ENCODE measurements at regions of chr2 and their contacts with region 1.

Region 1: DNA sequence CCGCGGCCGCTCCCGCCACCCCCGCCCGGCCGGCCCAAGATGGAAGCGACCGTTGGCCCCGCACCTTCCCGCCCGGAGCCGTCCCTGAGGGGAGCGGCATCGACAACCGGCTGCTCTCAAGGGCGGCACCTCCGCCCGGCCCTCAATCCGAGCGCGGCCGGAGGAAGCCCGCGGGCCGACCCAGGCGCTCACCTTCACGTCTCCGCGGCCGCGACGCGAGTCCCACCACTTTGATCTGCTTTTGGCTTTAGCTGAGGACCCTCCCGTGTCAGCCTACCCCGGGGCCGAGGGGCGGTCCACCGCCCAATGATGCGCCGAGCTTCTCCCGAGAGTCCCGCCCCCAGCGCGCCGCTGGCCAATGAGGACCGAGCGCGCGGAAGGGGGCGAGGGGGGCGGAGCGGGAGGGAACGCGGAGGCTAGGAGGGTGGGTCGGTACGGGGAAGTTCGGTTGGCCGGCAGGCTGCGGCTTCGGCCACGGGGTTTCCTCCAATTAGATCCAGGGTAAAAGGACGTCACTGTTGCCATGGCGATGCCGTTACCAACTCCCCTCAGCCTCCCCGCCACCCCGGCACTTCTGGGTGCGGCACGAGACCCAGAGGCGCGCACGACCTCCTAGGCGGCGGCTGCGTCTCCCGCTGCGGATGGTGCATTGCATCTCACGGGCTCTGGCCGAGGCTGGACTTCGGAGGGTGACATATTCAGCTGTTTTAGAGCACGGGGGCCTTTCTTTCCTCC is at the start of gene YWHAQ:
- DNase-seq: peak; percentile 95
- H3K4me3 Mint-ChIP-seq: peak within 1 kb of the TSS; percentile 97
- H3K27ac Mint-ChIP-seq: peak within 1 kb of the TSS; percentile 93
- H3K4me1 Mint-ChIP-seq: peaks cover 45% of the 10 kb centered on the region
- H3K27me3 Mint-ChIP-seq: no peaks in the 10 kb centered on the region
- total RNA-seq, gene YWHAQ: 248 to 261 TPM

Region 2: DNA sequence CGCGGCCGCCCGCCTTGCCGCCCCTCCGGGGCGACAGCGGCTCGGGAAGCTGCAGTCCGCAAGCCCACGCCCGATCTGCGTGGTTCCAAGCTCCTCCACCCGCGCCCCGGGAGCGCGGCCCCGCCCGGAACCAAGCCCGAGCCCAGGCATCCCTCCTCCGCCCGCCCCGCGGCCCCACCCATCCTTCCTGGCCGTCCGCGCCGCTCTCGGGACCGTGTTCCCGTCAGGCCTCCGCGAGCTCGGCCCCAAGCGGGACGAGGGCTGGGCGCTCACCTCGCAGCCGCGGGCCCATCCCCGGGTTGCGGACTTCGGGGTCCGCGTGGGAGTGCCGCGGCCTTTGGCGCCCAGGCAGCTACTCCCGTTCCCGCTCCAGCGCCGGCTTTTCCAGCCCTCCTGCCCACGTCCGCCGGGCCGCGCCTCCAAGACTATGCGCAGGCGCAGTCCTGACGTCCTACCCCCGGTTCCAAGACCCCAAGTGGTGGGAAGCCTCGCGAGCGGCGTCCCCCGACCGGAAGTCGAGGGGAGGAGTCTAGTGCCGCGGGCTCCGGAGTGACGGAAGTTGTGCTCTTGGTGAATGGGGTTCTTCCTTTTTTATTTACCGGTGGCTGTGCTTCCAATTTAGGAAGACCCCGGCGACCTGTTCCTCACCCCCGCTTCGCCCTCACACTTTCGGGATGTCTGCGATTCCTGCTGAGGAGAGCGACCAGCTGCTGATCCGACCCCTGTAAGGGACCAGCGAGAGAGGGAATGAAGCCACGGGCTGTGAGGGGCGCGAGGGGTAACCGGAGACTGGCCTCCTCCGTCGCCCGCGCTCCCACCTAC is 207.6 kb before region 1 on chr2 and contains the starts of genes CPSF3 and ITGB1BP1:
- CTCF ChIA-PET with region 1: no interaction called
- intact Hi-C with region 1: loop called (anchors 1 kb)
- DNase-seq: peak; percentile 97
- H3K4me3 Mint-ChIP-seq: no peak within 1 kb of the TSS
- H3K27ac Mint-ChIP-seq: peak within 1 kb of the TSS; percentile 92
- H3K4me1 Mint-ChIP-seq: peaks cover 39% of the 10 kb centered on the region
- H3K27me3 Mint-ChIP-seq: no peaks in the 10 kb centered on the region
- total RNA-seq, gene CPSF3: 64.5 to 65.7 TPM
- total RNA-seq, gene ITGB1BP1: 97.2 to 97.4 TPM

Region 3: DNA sequence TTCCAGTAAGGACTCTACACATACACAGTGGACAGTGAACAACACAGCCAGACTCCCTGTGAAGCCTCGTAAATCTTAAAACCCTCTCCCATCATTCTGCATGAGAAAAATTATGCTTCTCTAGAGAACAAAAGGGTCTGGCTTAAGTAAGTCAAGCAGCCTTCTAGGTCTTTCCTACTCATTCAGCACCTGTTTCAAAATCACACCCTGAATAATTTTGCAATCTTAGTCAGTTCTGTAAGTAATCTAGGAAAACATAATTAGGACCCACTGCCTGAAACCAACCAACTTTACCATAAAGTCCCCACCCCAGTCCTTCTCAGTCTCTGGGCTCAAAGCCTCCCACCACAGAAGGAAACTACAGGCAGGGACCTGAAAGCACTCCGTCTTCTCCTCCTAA is 136.8 kb before region 1 on chr2:
- CTCF ChIA-PET with region 1: no interaction called
- intact Hi-C with region 1: loop called (anchors 5 kb)
- DNase-seq: no peak
- H3K4me3 Mint-ChIP-seq: no peak overlapping the region
- H3K27ac Mint-ChIP-seq: peak overlapping the region; percentile 61
- H3K4me1 Mint-ChIP-seq: peaks cover 32% of the 10 kb centered on the region
- H3K27me3 Mint-ChIP-seq: no peaks in the 10 kb centered on the region

Region 4: GRCh38 chr2:9613291-9613690 is 17.6 kb before region 1 on chr2:
- CTCF ChIA-PET with region 1: interaction called, 8 read pairs
- intact Hi-C with region 1: loop called (anchors 1 kb)
- DNase-seq: no peak
- H3K4me3 Mint-ChIP-seq: no peak overlapping the region
- H3K27ac Mint-ChIP-seq: no peak overlapping the region
- H3K4me1 Mint-ChIP-seq: peaks cover 78% of the 10 kb centered on the region
- H3K27me3 Mint-ChIP-seq: no peaks in the 10 kb centered on the region

Region 5: GRCh38 chr2:9656270-9656766 is 25.4 kb after region 1 on chr2:
- CTCF ChIA-PET with region 1: no interaction called
- intact Hi-C with region 1: loop called (anchors 1 kb)
- DNase-seq: peak; percentile 75
- H3K4me3 Mint-ChIP-seq: no peak overlapping the region
- H3K27ac Mint-ChIP-seq: peak overlapping the region; percentile 74
- H3K4me1 Mint-ChIP-seq: peaks cover 19% of the 10 kb centered on the region
- H3K27me3 Mint-ChIP-seq: no peaks in the 10 kb centered on the region

Region 6: GRCh38 chr2:9753276-9753600 is 122.3 kb after region 1 on chr2:
- CTCF ChIA-PET with region 1: no interaction called
- intact Hi-C with region 1: loop called (anchors 1 kb)
- DNase-seq: peak; percentile 85
- H3K4me3 Mint-ChIP-seq: peak overlapping the region; percentile 23
- H3K27ac Mint-ChIP-seq: peak overlapping the region; percentile 65
- H3K4me1 Mint-ChIP-seq: peaks cover 39% of the 10 kb centered on the region
- H3K27me3 Mint-ChIP-seq: peaks cover 22% of the 10 kb centered on the region

Region 7: GRCh38 chr2:10254373-10255151 is 623.6 kb after region 1 on chr2:
- CTCF ChIA-PET with region 1: no interaction called
- intact Hi-C with region 1: no loop called
- DNase-seq: no peak
- H3K4me3 Mint-ChIP-seq: no peak overlapping the region
- H3K27ac Mint-ChIP-seq: no peak overlapping the region
- H3K4me1 Mint-ChIP-seq: no peaks in the 10 kb centered on the region
- H3K27me3 Mint-ChIP-seq: no peaks in the 10 kb centered on the region

Region 8: DNA sequence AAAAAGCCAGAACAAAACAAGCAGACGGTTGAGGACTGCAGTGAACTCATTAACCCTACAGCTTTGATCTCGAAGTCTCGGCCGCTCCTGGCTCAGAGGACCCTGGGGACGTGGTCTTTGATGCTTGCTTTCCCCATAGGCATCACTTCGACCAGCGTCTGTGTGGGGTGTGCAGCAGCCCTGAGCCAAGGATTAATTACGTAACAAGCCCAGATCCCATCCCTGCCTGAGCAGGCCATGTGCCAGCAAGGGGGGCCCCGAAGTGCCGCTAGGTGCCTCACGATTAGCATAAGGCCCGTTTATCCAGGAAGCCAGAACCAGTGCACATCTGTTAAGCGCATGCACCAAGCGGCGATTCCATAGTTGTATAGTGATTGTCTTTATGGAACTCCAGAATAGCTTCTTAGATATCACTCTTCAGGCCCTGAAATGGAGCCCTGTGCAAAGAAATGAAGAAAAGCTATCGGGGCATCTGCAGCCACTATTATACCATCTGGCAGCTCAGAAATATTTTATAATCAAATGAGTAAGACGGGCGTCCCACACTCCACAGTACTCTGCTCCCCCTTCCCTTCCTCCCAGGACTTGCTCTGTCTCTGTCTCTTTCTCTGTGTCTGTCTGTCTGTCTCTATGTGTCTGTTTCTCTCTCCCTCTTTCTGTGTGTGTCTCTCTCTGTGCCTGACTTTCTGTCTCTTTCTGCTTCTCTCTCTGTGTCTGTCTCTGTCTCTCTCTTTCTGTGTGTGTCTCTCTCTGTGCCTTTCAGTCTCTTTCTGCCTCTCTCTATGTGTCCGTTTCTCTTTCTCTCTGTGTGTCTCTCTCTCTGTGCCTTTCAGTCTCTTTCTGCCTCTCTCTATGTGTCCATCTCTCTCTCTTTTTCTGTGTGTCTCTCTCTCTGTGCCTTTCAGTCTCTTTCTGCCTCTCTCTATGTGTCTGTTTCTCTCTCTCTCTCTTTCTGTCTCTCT is 713.5 kb after region 1 on chr2:
- CTCF ChIA-PET with region 1: no interaction called
- intact Hi-C with region 1: no loop called
- DNase-seq: no peak
- H3K4me3 Mint-ChIP-seq: no peak overlapping the region
- H3K27ac Mint-ChIP-seq: peak overlapping the region; percentile 3
- H3K4me1 Mint-ChIP-seq: peaks cover 73% of the 10 kb centered on the region
- H3K27me3 Mint-ChIP-seq: no peaks in the 10 kb centered on the region

Measured in activated naive CD4-positive, alpha-beta T cell treated with anti-CD3 and anti-CD28 coated beads for 36 hours (primary cell).